ENCODE measurements at regions of chr18 and their contacts with region 1.

Region 1: DNA sequence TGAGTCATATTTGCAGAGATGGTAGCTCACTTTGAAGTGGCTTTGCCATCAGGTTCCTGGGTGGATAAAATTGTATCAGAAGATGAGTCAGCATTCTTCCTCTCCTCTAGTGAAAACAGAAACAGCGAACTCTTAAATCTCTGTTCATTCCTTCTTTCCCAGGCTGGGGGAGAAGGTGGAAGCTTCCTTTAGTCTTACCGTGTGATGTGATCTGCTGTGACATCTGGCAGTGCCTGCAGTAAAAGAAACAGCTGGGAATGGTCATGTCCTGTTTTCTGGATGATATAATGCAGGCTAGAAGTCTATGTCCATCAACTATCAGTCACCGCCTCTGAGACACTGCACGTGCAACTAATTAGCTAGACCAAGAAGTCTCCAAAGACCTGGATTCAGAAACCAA is 171.6 kb downstream of the VAPA start:
- DNase-seq: no peak
- H3K4me3 ChIP-seq: no peak overlapping the region
- H3K27ac ChIP-seq: no peak overlapping the region
- H3K4me1 ChIP-seq: no peaks in the 10 kb centered on the region
- H3K27me3 ChIP-seq: no peaks in the 10 kb centered on the region
- CTCF ChIP-seq: no peak
- EP300 ChIP-seq: no peak
- POLR2A ChIP-seq: no peak

Region 2: DNA sequence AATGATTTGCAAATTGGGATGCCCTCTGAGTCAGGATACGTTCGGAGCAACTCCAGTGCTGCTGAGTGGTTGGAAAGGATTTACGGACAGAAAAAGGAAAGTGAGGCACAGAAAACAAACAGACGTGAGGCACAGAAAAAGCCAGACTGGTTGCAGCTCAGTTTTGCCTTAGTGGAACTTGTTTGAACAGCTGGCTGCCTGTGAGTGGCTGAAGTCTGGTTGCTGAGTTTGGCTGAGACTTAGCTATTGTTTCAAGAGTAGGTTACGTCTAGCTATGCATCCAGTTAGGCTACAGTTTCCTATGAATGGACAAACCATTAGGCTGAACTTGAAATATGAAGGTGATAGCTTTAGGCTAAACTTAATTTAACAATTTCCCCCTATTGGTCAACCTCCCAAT is 85.0 kb after region 1 on chr18:
- intact Hi-C with region 1: loop called (anchors 5 kb)
- DNase-seq: no peak
- H3K4me3 ChIP-seq: no peak overlapping the region
- H3K27ac ChIP-seq: no peak overlapping the region
- H3K4me1 ChIP-seq: peaks cover 0 to 9% (median 0%) of the 10 kb centered on the region in 4 donors
- H3K27me3 ChIP-seq: no peaks in the 10 kb centered on the region
- CTCF ChIP-seq: no peak
- EP300 ChIP-seq: no peak
- POLR2A ChIP-seq: no peak